Activated B cell treated with CpG ODN at 0.5 μM for 24 hours (primary cell): ENCODE measurements at regions of chr14 and their contacts with region 1.

Region 1: GRCh38 chr14:22303589-22304195 is 285.3 kb downstream of the DAD1 start:
- DNase-seq: no peak
- ATAC-seq: no peak
- H3K4me3 Mint-ChIP-seq: no peak overlapping the region
- H3K27ac Mint-ChIP-seq: no peak overlapping the region
- H3K4me1 Mint-ChIP-seq: no peaks in the 10 kb centered on the region
- H3K27me3 Mint-ChIP-seq: peaks cover 18% of the 10 kb centered on the region
- CTCF ChIP-seq: no peak

Region 2: DNA sequence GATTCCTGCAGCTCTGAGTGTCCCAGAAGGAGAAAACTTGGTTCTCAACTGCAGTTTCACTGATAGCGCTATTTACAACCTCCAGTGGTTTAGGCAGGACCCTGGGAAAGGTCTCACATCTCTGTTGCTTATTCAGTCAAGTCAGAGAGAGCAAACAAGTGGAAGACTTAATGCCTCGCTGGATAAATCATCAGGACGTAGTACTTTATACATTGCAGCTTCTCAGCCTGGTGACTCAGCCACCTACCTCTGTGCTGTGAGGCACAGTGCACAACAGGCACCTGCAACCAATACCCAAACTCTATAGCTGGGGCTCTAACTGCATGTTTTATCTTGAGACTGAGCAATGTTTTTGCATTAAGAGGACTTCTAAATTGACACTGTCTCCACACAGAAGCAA is 250.9 kb before region 1 on chr14:
- CTCF ChIA-PET with region 1: no interaction called
- POLR2A ChIA-PET with region 1: no interaction called
- intact Hi-C with region 1: no loop called
- DNase-seq: no peak
- ATAC-seq: no peak
- H3K4me3 Mint-ChIP-seq: no peak overlapping the region
- H3K27ac Mint-ChIP-seq: no peak overlapping the region
- H3K4me1 Mint-ChIP-seq: no peaks in the 10 kb centered on the region
- H3K27me3 Mint-ChIP-seq: peaks cover 55% of the 10 kb centered on the region
- CTCF ChIP-seq: no peak

Region 3: GRCh38 chr14:22282417-22282816 is 21.3 kb before region 1 on chr14:
- CTCF ChIA-PET with region 1: no interaction called
- POLR2A ChIA-PET with region 1: no interaction called
- intact Hi-C with region 1: loop called (anchors 2 kb)
- DNase-seq: no peak
- ATAC-seq: peak; percentile 75
- H3K4me3 Mint-ChIP-seq: peak overlapping the region; percentile 46
- H3K27ac Mint-ChIP-seq: no peak overlapping the region
- H3K4me1 Mint-ChIP-seq: peaks cover 29% of the 10 kb centered on the region
- H3K27me3 Mint-ChIP-seq: no peaks in the 10 kb centered on the region
- CTCF ChIP-seq: no peak